ENCODE measurements at regions of chr3 and their contacts with region 1.

Region 1: GRCh38 chr3:13858816-13859482 is 20.9 kb downstream of the WNT7A start:
- DNase-seq: no peak
- H3K4me3 ChIP-seq: no peak overlapping the region
- H3K27me3 ChIP-seq: no peaks in the 10 kb centered on the region
- CTCF ChIP-seq: no peak

Region 2: GRCh38 chr3:13822042-13822441 is 36.9 kb before region 1 on chr3:
- CTCF ChIA-PET with region 1: no interaction called
- POLR2A ChIA-PET with region 1: no interaction called
- DNase-seq: no peak
- H3K4me3 ChIP-seq: no peak overlapping the region
- H3K27me3 ChIP-seq: no peaks in the 10 kb centered on the region
- CTCF ChIP-seq: no peak

Region 3: DNA sequence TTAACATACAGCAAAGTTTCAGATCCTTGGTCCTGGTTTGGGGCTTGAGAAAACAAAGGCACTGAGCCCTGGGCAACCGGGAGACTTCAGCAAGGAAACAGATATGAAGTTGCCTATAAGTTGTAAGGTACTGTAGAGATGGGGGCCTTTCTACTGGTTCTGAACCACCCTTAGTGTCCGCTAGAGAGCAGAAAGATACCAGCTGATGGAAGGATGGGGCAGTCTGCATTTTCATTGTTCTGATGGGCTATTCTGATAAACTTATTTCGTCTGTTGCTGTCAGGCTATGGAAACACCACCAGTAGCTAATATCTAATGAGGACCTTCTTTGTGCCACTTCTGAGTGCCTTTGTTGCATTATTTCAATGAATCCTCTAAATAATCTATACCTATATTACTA is 998.6 kb after region 1 on chr3:
- CTCF ChIA-PET with region 1: no interaction called
- POLR2A ChIA-PET with region 1: interaction called, 11 read pairs
- DNase-seq: no peak
- H3K4me3 ChIP-seq: no peak overlapping the region
- H3K27me3 ChIP-seq: no peaks in the 10 kb centered on the region
- CTCF ChIP-seq: no peak